ENCODE measurements at regions of chr3 and their contacts with region 1.

Region 1: DNA sequence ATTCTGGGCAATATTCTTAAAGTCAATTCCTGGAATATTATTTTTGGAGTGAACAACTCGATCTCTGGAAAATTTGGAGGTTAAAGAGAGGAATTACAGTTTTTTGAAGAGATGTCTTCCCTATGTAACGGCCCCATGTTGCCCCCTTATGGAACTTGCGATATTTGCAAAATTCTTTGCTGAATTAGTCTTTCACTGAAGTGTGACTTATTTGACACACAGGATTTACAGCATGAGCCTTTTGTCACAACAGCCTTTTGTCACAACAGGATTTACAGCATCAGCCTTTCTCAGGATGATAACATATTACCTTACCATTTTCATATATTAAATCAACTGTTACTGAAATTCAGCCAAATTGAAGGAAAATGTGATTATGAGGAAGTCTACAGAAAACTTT is 37.8 kb upstream of the SPTSSB start:
- DNase-seq: no peak
- ATAC-seq: no peak
- H3K4me3 ChIP-seq: no peak overlapping the region
- H3K27ac ChIP-seq: no peak overlapping the region
- H3K4me1 ChIP-seq: peaks cover 0 to 2% of the 10 kb centered on the region in 2 donors
- H3K27me3 ChIP-seq: no peaks in the 10 kb centered on the region

Region 2: DNA sequence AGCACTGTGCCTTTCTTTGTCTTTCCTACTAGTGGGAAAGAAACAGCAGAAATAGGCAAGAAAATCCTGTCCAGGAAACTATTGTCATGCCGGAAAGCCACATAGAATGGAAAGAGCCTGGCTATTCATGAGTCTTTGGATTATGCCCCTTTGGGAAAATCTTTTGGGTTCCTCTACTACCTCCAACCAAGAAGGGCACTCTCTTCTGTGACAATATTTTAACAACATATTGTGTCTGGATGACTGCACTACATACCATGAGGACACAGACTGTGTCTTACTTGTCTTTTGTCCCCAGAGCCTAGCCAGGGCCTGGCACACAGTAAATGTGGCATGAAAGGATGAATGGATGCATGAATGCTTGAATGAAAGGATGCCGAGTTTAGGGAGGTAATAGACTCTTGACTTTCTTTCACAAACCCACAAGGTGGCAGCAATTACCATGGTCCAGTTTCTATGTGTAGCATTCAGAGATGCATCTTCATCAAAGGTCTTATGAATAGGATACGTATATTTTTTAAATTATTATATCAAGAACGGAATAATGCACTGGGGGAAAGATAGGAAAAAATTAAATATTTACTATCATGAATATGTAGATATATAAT is 701.8 kb before region 1 on chr3:
- intact Hi-C with region 1: loop called in 1 of 2 experiments (anchors 10 kb)
- DNase-seq: no peak
- ATAC-seq: peak; percentile 60
- H3K4me3 ChIP-seq: no peak overlapping the region
- H3K27ac ChIP-seq: no peak overlapping the region
- H3K4me1 ChIP-seq: peaks cover 0 to 2% of the 10 kb centered on the region in 2 donors
- H3K27me3 ChIP-seq: peaks cover 0 to 2% of the 10 kb centered on the region in 2 donors

Region 3: GRCh38 chr3:160931474-160931873 is 477.6 kb before region 1 on chr3:
- intact Hi-C with region 1: loop called in 1 of 2 experiments (anchors 10 kb)
- DNase-seq: no peak
- ATAC-seq: no peak
- H3K4me3 ChIP-seq: no peak overlapping the region
- H3K27ac ChIP-seq: no peak overlapping the region
- H3K4me1 ChIP-seq: no peaks in the 10 kb centered on the region
- H3K27me3 ChIP-seq: no peaks in the 10 kb centered on the region

Region 4: GRCh38 chr3:160956806-160957205 is 452.3 kb before region 1 on chr3:
- intact Hi-C with region 1: loop called in 1 of 2 experiments (anchors 10 kb)
- DNase-seq: no peak
- ATAC-seq: no peak
- H3K4me3 ChIP-seq: no peak overlapping the region
- H3K27ac ChIP-seq: no peak overlapping the region
- H3K4me1 ChIP-seq: no peaks in the 10 kb centered on the region
- H3K27me3 ChIP-seq: no peaks in the 10 kb centered on the region

Region 5: GRCh38 chr3:161274719-161275298 is 134.3 kb before region 1 on chr3:
- intact Hi-C with region 1: loop called in 1 of 2 experiments (anchors 5 kb)
- DNase-seq: no peak
- ATAC-seq: no peak
- H3K4me3 ChIP-seq: no peak overlapping the region
- H3K27ac ChIP-seq: no peak overlapping the region
- H3K4me1 ChIP-seq: no peaks in the 10 kb centered on the region
- H3K27me3 ChIP-seq: no peaks in the 10 kb centered on the region

Region 6: GRCh38 chr3:161333696-161334095 is 75.4 kb before region 1 on chr3:
- intact Hi-C with region 1: no loop called
- DNase-seq: no peak
- ATAC-seq: no peak
- H3K4me3 ChIP-seq: no peak overlapping the region
- H3K27ac ChIP-seq: no peak overlapping the region
- H3K4me1 ChIP-seq: no peaks in the 10 kb centered on the region
- H3K27me3 ChIP-seq: no peaks in the 10 kb centered on the region

Region 7: GRCh38 chr3:161672478-161672877 is 263.4 kb after region 1 on chr3:
- intact Hi-C with region 1: no loop called
- DNase-seq: no peak
- ATAC-seq: no peak
- H3K4me3 ChIP-seq: no peak overlapping the region
- H3K27ac ChIP-seq: no peak overlapping the region
- H3K4me1 ChIP-seq: no peaks in the 10 kb centered on the region
- H3K27me3 ChIP-seq: no peaks in the 10 kb centered on the region